ENCODE measurements at regions of chr1 and their contacts with region 1.

Region 1: GRCh38 chr1:33181921-33182341 is at the start of gene TRIM62:
- DNase-seq: peak; percentile 78
- H3K4me3 Mint-ChIP-seq: peak within 1 kb of the TSS; percentile 83
- H3K27ac Mint-ChIP-seq: no peak within 1 kb of the TSS
- H3K4me1 Mint-ChIP-seq: peaks cover 14% of the 10 kb centered on the region
- H3K27me3 Mint-ChIP-seq: peaks cover 6% of the 10 kb centered on the region
- total RNA-seq, gene TRIM62: 3.6 to 3.9 TPM

Region 2: GRCh38 chr1:33094971-33095604 is 86.8 kb before region 1 on chr1:
- CTCF ChIA-PET with region 1: interaction called, 11 read pairs
- POLR2A ChIA-PET with region 1: no interaction called
- intact Hi-C with region 1: no loop called
- DNase-seq: peak; percentile 28
- H3K4me3 Mint-ChIP-seq: no peak overlapping the region
- H3K27ac Mint-ChIP-seq: no peak overlapping the region
- H3K4me1 Mint-ChIP-seq: peaks cover 28% of the 10 kb centered on the region
- H3K27me3 Mint-ChIP-seq: no peaks in the 10 kb centered on the region

Region 3: GRCh38 chr1:33228935-33229487 is 47.1 kb after region 1 on chr1:
- CTCF ChIA-PET with region 1: no interaction called
- POLR2A ChIA-PET with region 1: no interaction called
- intact Hi-C with region 1: no loop called
- DNase-seq: no peak
- H3K4me3 Mint-ChIP-seq: no peak overlapping the region
- H3K27ac Mint-ChIP-seq: no peak overlapping the region
- H3K4me1 Mint-ChIP-seq: peaks cover 3% of the 10 kb centered on the region
- H3K27me3 Mint-ChIP-seq: peaks cover 11% of the 10 kb centered on the region